CD4-positive, alpha-beta T cell (primary cell): ENCODE measurements at regions of chr6 and their contacts with region 1.

Region 1: GRCh38 chr6:52020945-52021570 is 66.4 kb downstream of the PKHD1 start:
- DNase-seq: peak in 3 of 14 experiments; percentile 10 to 41 (median 24)
- ATAC-seq: no peak
- H3K4me3 ChIP-seq: no peak overlapping the region
- H3K4me3 Mint-ChIP-seq: no peak overlapping the region
- H3K27ac ChIP-seq: no peak overlapping the region
- H3K27ac Mint-ChIP-seq: no peak overlapping the region
- H3K4me1 ChIP-seq: no peaks in the 10 kb centered on the region
- H3K4me1 Mint-ChIP-seq: no peaks in the 10 kb centered on the region
- H3K27me3 ChIP-seq: peaks cover 0 to 8% of the 10 kb centered on the region in 2 experiments
- H3K27me3 Mint-ChIP-seq: peaks cover 14% of the 10 kb centered on the region
- CTCF ChIP-seq: peak; percentile 92

Region 2: GRCh38 chr6:50128420-50129005 is 1892.5 kb before region 1 on chr6:
- CTCF ChIA-PET with region 1: no interaction called
- POLR2A ChIA-PET with region 1: no interaction called
- intact Hi-C with region 1: loop called in 1 of 2 experiments (anchors 10 kb)
- DNase-seq: no peak
- ATAC-seq: no peak
- H3K4me3 ChIP-seq: no peak overlapping the region
- H3K4me3 Mint-ChIP-seq: no peak overlapping the region
- H3K27ac ChIP-seq: no peak overlapping the region
- H3K27ac Mint-ChIP-seq: no peak overlapping the region
- H3K4me1 ChIP-seq: no peaks in the 10 kb centered on the region
- H3K4me1 Mint-ChIP-seq: no peaks in the 10 kb centered on the region
- H3K27me3 ChIP-seq: no peaks in the 10 kb centered on the region
- H3K27me3 Mint-ChIP-seq: no peaks in the 10 kb centered on the region
- CTCF ChIP-seq: peak; percentile 49

Region 3: GRCh38 chr6:50816115-50816675 is 1204.9 kb before region 1 on chr6:
- CTCF ChIA-PET with region 1: no interaction called
- POLR2A ChIA-PET with region 1: no interaction called
- intact Hi-C with region 1: loop called (anchors 2 to 5 kb)
- DNase-seq: peak in 13 of 14 experiments; percentile 10 to 68 (median 26)
- ATAC-seq: no peak
- H3K4me3 ChIP-seq: peak overlapping the region; percentile 60
- H3K4me3 Mint-ChIP-seq: peak overlapping the region; percentile 90
- H3K27ac ChIP-seq: no peak overlapping the region
- H3K27ac Mint-ChIP-seq: no peak overlapping the region
- H3K4me1 ChIP-seq: peaks cover 3% of the 10 kb centered on the region
- H3K4me1 Mint-ChIP-seq: peaks cover 17% of the 10 kb centered on the region
- H3K27me3 ChIP-seq: peaks cover 35 to 53% of the 10 kb centered on the region in 2 experiments
- H3K27me3 Mint-ChIP-seq: peaks cover 78% of the 10 kb centered on the region
- CTCF ChIP-seq: peak; percentile 61

Region 4: DNA sequence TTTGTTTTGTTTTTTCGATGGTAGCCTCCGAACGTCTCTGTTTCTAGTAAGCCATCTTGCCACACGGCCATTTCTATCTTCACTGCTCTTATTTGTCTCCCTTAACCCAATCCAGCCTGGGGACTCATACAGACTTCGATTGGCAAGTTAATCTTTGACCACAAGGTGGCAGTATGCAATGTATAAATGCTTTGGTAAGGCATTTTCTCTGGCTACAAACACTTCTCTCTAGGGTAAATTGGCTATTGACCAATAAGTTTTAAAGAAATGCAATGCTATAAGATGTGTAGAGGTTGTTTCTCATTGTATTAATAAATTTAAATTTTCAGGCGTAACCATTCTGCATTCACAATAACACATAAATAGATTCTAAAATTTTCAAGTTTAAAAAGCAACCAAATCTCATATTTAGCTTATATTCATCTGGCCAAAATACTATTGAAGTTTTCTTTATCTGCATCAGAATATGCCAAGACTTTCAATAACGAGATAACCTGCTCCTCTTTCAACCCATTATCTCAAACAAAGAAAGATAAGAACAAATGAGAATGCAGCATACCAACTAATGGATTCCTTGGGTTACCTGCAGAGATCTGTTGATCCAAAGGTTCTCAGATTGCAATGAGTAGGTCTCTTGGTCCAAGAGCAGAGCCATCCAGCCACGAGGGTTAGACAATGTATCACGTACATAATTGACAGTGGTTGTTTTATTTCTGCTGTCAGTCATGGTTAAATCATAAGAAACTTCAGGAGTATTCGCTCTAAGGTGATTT is 165.6 kb before region 1 on chr6:
- CTCF ChIA-PET with region 1: no interaction called
- POLR2A ChIA-PET with region 1: no interaction called
- intact Hi-C with region 1: loop called in 1 of 2 experiments (anchors 2 kb)
- DNase-seq: peak in 3 of 14 experiments; percentile 34 to 57 (median 51)
- ATAC-seq: no peak
- H3K4me3 ChIP-seq: no peak overlapping the region
- H3K4me3 Mint-ChIP-seq: no peak overlapping the region
- H3K27ac ChIP-seq: no peak overlapping the region
- H3K27ac Mint-ChIP-seq: no peak overlapping the region
- H3K4me1 ChIP-seq: no peaks in the 10 kb centered on the region
- H3K4me1 Mint-ChIP-seq: no peaks in the 10 kb centered on the region
- H3K27me3 ChIP-seq: peaks cover 0 to 2% of the 10 kb centered on the region in 2 experiments
- H3K27me3 Mint-ChIP-seq: peaks cover 14% of the 10 kb centered on the region
- CTCF ChIP-seq: peak; percentile 57

Region 5: DNA sequence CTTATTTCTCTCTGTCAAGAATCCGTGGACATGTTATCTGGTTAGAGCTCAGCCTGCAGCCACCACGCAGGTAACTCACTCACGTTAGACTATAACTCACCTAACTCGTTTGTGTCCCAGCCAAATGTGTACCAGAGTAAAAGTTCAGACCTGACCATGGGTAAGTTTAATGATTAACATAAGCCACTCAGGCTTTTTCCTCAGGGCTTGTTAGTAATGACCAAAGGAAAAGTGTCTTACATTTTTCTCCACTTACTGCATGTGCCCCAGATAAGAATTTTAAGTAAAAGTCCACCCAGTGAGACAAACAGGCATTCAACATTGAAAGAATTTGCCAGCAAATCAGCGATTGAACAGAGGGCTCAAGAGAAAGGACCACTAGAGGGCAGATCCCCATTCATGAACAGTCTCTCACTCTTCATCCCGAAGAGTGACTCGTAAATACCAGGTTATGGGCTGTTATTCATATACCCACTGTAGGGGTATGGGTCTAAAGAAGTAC is 66.5 kb after region 1 on chr6 and contains the start of gene PKHD1:
- CTCF ChIA-PET with region 1: no interaction called
- POLR2A ChIA-PET with region 1: no interaction called
- intact Hi-C with region 1: no loop called
- DNase-seq: peak in 1 of 14 experiments; percentile 10
- ATAC-seq: no peak
- H3K4me3 ChIP-seq: no peak within 1 kb of the TSS
- H3K4me3 Mint-ChIP-seq: no peak within 1 kb of the TSS
- H3K27ac ChIP-seq: no peak within 1 kb of the TSS
- H3K27ac Mint-ChIP-seq: no peak within 1 kb of the TSS
- H3K4me1 ChIP-seq: no peaks in the 10 kb centered on the region
- H3K4me1 Mint-ChIP-seq: no peaks in the 10 kb centered on the region
- H3K27me3 ChIP-seq: peaks cover 0 to 5% of the 10 kb centered on the region in 2 experiments
- H3K27me3 Mint-ChIP-seq: peaks cover 7% of the 10 kb centered on the region
- CTCF ChIP-seq: peak; percentile 25
- total RNA-seq, gene PKHD1: 0.03 TPM in 1 of 2 experiments, not detected in the other